ENCODE measurements at regions of chr1 and their contacts with region 1.

Region 1: GRCh38 chr1:230084138-230084880 is 17.3 kb downstream of the GALNT2 start:
- DNase-seq: peak; percentile 34 to 66
- H3K4me3 ChIP-seq: no peak overlapping the region
- H3K27ac ChIP-seq: peak overlapping the region in 4 of 5 donors; percentile 56 to 85 (median 70)
- H3K4me1 ChIP-seq: peaks cover 13 to 85% (median 51%) of the 10 kb centered on the region in 4 donors
- H3K27me3 ChIP-seq: no peaks in the 10 kb centered on the region
- CTCF ChIP-seq: no peak
- EP300 ChIP-seq: no peak
- POLR2A ChIP-seq: no peak

Region 2: GRCh38 chr1:230011333-230012092 is 72.8 kb before region 1 on chr1:
- intact Hi-C with region 1: no loop called
- DNase-seq: no peak
- H3K4me3 ChIP-seq: no peak overlapping the region
- H3K27ac ChIP-seq: no peak overlapping the region
- H3K4me1 ChIP-seq: no peaks in the 10 kb centered on the region
- H3K27me3 ChIP-seq: no peaks in the 10 kb centered on the region
- CTCF ChIP-seq: no peak
- EP300 ChIP-seq: no peak
- POLR2A ChIP-seq: no peak

Region 3: GRCh38 chr1:230270559-230271281 is 186.4 kb after region 1 on chr1:
- intact Hi-C with region 1: loop called (anchors 10 kb)
- DNase-seq: no peak
- H3K4me3 ChIP-seq: no peak overlapping the region
- H3K27ac ChIP-seq: peak overlapping the region; percentile 4 to 57 (median 27)
- H3K4me1 ChIP-seq: peaks cover 15 to 51% (median 30%) of the 10 kb centered on the region in 4 donors
- H3K27me3 ChIP-seq: no peaks in the 10 kb centered on the region
- CTCF ChIP-seq: no peak
- EP300 ChIP-seq: no peak
- POLR2A ChIP-seq: no peak